ENCODE measurements at regions of chr4 and their contacts with region 1.

Region 1: DNA sequence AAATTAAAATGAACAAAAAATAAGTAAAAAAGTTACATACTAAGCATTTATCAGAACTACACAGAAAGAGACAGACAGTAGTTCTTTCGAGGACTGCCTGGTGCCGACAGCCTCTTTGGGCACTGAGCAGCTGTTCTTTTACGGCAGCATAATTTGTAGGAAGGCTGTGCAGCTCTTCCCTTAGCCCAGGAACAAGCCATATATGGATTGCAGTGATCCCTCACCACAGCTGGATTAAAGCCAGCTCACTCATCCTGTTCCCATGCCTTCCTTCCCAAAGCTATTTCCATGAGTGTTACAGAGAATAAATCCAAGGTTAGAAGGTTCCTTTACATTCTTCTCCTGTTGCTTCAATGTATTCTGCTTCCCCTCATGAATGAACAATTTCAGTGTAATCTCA is 71.7 kb downstream of the DDX60L start:
- DNase-seq: peak in 1 of 2 donors; percentile 60
- ATAC-seq: peak; percentile 90 to 96 (median 94)
- H3K4me3 ChIP-seq: peak overlapping the region in 4 of 10 donors; percentile 2 to 31 (median 8)
- H3K27ac ChIP-seq: peak overlapping the region; percentile 41 to 91 (median 81)
- H3K4me1 ChIP-seq: peaks cover 0 to 44% (median 20%) of the 10 kb centered on the region in 9 donors
- H3K27me3 ChIP-seq: no peaks in the 10 kb centered on the region
- CTCF ChIP-seq: no peak

Region 2: DNA sequence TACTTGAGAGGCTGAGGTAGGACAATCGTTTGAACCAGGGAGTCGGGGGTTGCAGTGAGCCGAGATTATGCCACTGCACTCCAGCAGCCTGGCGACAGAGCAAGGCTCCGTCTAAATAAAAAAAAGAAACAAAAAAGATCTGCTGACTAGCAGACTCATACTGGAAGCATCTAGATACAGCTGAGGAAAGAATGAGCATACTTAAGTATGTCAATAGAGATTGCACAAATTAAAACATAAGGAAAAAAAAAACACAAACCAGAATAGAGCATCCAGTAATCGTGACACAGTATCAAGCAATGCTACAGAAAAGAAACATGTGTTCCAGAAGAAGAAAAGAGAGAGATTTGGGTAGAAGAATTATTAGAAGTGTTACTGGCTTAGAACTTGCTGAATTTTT is 1068.8 kb before region 1 on chr4:
- intact Hi-C with region 1: loop called in 1 of 10 experiments (anchors 10 kb)
- DNase-seq: no peak
- ATAC-seq: no peak
- H3K4me3 ChIP-seq: no peak overlapping the region
- H3K27ac ChIP-seq: no peak overlapping the region
- H3K4me1 ChIP-seq: no peaks in the 10 kb centered on the region
- H3K27me3 ChIP-seq: no peaks in the 10 kb centered on the region
- CTCF ChIP-seq: no peak

Region 3: GRCh38 chr4:168183717-168184608 is 224.7 kb before region 1 on chr4:
- intact Hi-C with region 1: loop called in 2 of 10 experiments (anchors 10 kb)
- DNase-seq: no peak
- ATAC-seq: peak in 6 of 8 donors; percentile 25 to 57 (median 52)
- H3K4me3 ChIP-seq: no peak overlapping the region
- H3K27ac ChIP-seq: peak overlapping the region in 5 of 10 donors; percentile 9 to 52 (median 27)
- H3K4me1 ChIP-seq: peaks cover 0 to 7% (median 0%) of the 10 kb centered on the region in 9 donors
- H3K27me3 ChIP-seq: no peaks in the 10 kb centered on the region
- CTCF ChIP-seq: peak; percentile 15 to 66 (median 62)

Region 4: GRCh38 chr4:168264903-168265302 is 143.7 kb before region 1 on chr4:
- intact Hi-C with region 1: loop called in 1 of 10 experiments (anchors 10 kb)
- DNase-seq: peak in 1 of 2 donors; percentile 70
- ATAC-seq: peak; percentile 75 to 95 (median 94)
- H3K4me3 ChIP-seq: no peak overlapping the region
- H3K27ac ChIP-seq: peak overlapping the region in 9 of 10 donors; percentile 47 to 82 (median 74)
- H3K4me1 ChIP-seq: peaks cover 0 to 13% (median 3%) of the 10 kb centered on the region in 9 donors
- H3K27me3 ChIP-seq: no peaks in the 10 kb centered on the region
- CTCF ChIP-seq: no peak

Region 5: DNA sequence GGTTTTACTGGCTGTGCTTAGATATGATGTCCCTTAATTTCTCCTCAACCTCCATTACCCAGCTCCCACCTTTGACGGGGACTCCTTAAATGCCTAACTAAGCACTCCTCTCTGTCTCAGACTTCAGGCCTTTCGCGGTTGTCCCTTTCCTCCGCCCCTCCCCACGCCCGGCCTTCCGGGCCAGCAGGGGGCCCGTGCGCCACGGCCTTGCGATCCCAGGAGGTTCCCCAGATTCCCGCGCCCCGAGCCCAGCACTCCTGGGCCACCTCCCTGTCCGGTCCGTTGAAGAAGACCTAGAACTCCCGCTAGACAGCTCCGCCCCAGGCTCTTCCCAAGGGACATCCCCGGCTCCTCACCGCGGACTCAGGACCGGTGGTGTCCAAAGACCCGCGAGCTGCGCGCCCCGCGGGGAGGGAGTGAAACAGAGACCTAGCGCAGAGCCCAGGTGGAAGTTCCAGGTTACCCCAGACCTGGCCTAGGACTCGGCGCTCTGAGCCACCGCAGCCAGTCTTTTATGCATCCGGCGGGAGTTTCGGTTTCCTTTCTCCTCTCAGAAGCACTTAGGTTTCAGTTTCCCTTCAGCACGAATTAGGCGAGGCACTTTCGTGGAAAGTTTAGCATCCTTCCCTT is 90.2 kb before region 1 on chr4 and contains the start of gene DDX60:
- intact Hi-C with region 1: loop called in 4 of 10 experiments (anchors 2 to 10 kb)
- DNase-seq: peak; percentile 80 to 84
- ATAC-seq: peak; percentile 92 to 97 (median 96)
- H3K4me3 ChIP-seq: peak within 1 kb of the TSS; percentile 70 to 89 (median 80)
- H3K27ac ChIP-seq: peak within 1 kb of the TSS; percentile 94 to 100 (median 98)
- H3K4me1 ChIP-seq: peaks cover 0 to 26% (median 19%) of the 10 kb centered on the region in 9 donors
- H3K27me3 ChIP-seq: no peaks in the 10 kb centered on the region
- CTCF ChIP-seq: peak; percentile 34 to 69 (median 56)
- total RNA-seq, gene DDX60: 6.3 to 21.5 (median 8.4) TPM

Region 6: DNA sequence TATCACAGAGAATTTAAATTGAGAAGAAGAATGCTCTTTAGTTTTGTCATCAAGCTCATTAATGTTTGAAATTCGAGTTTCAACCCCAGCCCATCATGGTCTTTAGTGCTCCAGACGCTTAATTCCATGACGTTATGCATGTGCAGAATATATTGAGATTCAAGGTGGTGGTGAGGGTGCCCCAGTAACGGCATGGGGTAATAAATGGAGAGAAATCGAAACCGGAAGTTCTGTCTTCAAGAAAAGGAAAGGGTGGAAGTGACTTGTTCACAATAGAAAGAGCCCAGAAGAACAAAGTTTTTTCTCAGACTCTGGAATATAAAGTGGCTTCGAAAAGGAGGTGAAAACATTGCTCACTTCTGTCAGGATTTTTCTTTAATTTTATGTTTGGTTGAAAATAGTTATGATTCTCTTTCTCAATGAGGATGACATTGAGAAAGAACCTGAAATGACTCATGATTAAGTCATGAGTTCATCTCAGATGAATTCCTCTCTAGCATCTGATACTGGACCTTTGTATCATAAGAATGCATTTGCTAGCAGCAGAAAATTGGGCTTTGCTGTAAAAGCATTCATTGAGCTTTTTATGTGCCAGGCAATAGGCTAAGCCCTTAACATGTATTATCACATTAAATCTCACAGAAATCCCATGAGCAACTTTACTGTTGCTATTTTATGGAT is 72.5 kb after region 1 on chr4:
- intact Hi-C with region 1: loop called in 4 of 10 experiments (anchors 5 to 10 kb)
- DNase-seq: peak in 1 of 2 donors; percentile 14
- ATAC-seq: peak; percentile 34 to 78 (median 66)
- H3K4me3 ChIP-seq: peak overlapping the region; percentile 23 to 87 (median 74)
- H3K27ac ChIP-seq: peak overlapping the region; percentile 80 to 98 (median 94)
- H3K4me1 ChIP-seq: peaks cover 0 to 51% (median 16%) of the 10 kb centered on the region in 9 donors
- H3K27me3 ChIP-seq: no peaks in the 10 kb centered on the region
- CTCF ChIP-seq: no peak